ENCODE measurements at regions of chr5 and their contacts with region 1.

Region 1: DNA sequence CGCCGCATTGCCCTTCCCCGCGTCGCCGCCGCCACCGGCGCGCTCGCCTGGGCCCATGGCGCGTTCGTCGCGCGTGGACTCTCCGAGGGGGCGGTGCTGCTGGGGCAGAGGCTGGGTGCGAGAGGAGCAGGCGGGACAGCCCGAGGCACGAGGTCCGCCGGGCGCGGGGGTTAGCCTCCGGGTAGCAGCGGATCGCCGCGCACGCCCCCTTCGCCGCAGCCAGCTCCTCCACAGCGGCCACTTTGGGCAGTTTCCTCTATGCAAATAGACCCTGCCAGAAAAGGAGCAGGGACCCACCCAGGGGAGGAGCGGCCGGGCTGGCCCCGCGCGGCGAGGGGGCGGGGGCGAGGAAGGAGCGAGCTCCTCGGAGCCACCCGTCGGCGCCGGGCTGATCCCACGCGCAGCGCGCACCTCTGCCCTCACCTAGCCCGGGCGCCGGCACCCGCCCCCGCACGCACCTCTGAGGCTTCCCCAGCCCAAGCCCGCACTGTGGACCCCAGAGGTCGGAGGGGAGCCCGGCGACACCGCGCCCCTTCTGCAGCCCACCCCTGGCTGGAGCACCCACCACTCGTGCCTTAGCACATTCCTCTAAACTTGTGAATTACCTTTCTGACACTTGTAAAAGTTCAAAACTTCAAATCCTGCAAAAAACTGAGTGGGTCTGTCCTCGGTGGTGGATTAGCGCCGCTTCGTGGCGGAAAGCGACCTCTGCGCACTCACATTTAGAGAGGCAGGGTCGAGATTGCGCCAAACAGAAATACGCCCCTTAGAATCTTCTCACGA is at the start of gene COL23A1:
- DNase-seq: peak; percentile 90
- H3K4me3 ChIP-seq: peak within 1 kb of the TSS; percentile 57 to 60; a peak in 3 of 4 replicates
- H3K27ac ChIP-seq: peak within 1 kb of the TSS in 1 of 2 experiments; percentile 65; a peak in 1 of 4 replicates
- H3K4me1 ChIP-seq: peaks cover 0 to 20% of the 10 kb centered on the region in 2 experiments; a peak in 1 of 4 replicates
- H3K27me3 ChIP-seq: no peaks in the 10 kb centered on the region; the same call in 1 of the 2 replicates
- CTCF ChIP-seq: peak; percentile 54
- EP300 ChIP-seq: no peak
- RAD21 ChIP-seq: peak; percentile 90
- polyA plus RNA-seq, gene COL23A1: 0.03 and 0.10 TPM in 2 replicates

Region 2: DNA sequence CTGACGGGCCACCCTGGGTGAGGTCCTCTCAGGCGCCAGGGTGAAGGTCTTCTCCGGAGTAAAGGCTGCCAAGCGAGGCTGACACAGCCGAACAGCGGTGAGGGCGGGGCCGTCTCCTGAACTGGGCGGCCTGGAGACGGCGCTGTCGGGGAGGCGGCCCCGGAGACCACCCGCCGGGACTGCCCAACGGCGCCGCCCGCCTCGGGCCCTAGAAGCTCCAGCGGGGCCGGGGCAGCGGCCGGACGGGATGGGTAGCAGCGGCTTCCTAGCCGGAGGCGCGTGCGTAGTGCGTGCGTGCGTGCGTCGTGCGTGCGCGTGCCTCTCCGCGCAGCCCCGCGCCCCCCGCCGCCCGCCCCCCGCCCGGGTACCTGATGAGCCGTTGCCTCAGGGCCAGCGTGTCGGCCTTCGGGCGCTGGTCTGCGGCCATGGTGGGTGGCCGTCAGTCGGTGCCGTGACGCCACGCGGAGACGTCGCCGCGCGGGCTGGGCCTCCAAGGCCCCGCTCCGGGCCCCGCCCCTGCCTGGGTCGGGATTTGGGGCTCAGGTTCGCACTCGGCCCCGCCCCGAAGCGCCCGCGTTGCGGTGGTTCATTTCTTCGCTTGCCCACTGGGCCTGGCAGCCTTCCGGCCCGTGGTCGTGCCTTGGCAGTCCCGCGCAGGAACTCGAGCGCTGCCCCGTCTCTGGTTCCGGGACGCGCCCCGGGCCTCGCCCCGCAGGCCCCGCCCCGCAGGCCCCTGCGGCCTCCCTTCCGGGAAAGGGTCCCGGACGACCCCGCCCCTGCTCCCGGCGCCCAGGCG is 358.0 kb before region 1 on chr5 and contains the start of gene PHYKPL:
- CTCF ChIA-PET with region 1: interaction called, 147 read pairs
- POLR2A ChIA-PET with region 1: interaction called, 6 read pairs
- DNase-seq: peak; percentile 91
- H3K4me3 ChIP-seq: peak within 1 kb of the TSS; percentile 87
- H3K27ac ChIP-seq: peak within 1 kb of the TSS; percentile 56 to 86
- H3K4me1 ChIP-seq: peaks cover 11 to 33% of the 10 kb centered on the region in 2 experiments; a peak in 2 of 4 replicates
- H3K27me3 ChIP-seq: no peaks in the 10 kb centered on the region
- CTCF ChIP-seq: peak; percentile 27
- EP300 ChIP-seq: no peak
- RAD21 ChIP-seq: no peak
- polyA plus RNA-seq, gene PHYKPL: 46.8 and 61.3 TPM in 2 replicates

Region 3: DNA sequence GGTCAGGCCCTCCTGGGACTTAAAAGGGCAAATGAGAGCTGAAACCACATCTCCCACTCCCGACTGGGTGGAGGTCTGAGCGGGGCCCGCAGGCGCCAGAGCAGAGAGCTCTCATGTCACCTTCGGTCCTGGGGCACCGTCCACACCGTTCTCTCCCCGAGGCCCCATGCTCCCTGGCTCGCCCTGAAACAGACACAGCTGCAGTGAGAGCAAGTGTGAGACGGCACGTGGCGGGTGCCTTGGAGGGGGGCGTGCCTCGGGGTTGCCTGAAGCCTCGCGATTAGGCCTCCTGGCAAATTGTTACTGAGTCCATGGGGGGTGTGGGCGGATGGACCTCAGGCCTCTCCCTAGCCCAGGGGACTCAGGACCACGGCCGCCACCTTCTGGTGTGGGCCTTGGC is 333.6 kb before region 1 on chr5:
- CTCF ChIA-PET with region 1: interaction called, 10 read pairs
- POLR2A ChIA-PET with region 1: no interaction called
- DNase-seq: no peak
- H3K4me3 ChIP-seq: no peak overlapping the region
- H3K27ac ChIP-seq: no peak overlapping the region
- H3K4me1 ChIP-seq: no peaks in the 10 kb centered on the region
- H3K27me3 ChIP-seq: no peaks in the 10 kb centered on the region
- CTCF ChIP-seq: no peak
- EP300 ChIP-seq: no peak
- RAD21 ChIP-seq: no peak

Region 4: DNA sequence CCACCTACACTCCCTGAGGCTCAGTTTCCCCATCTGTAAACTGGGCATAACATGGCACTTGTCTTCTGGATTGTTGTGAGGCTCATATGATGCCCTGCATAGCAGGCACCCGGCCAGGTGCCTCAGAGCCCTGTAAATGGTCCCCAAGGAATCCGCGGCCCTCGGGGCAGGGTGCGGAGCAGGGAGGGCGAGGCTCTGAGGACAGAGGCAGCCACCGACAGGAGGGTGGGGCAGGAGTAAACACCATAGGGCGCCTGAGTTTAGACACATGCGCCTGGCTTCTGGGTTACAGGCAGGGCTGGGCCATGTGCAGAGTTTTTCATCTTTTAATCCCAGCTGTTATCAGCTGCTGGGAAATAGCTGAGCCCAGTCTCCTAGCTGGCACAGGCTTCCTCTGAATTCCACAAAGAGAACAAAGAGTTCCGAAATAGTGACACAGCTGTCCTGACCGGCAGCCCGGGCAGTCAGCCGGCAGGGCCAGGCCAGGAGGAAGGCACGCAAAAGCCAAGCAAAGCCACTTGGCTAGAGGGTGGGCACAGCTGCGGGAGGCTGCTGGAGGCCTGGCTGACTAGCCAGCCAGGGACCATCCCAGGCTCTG is 258.8 kb before region 1 on chr5:
- CTCF ChIA-PET with region 1: interaction called, 15 read pairs
- POLR2A ChIA-PET with region 1: no interaction called
- DNase-seq: peak; percentile 79
- H3K4me3 ChIP-seq: no peak overlapping the region
- H3K27ac ChIP-seq: peak overlapping the region in 1 of 2 experiments; percentile 92; a peak in 2 of 4 replicates
- H3K4me1 ChIP-seq: peaks cover 0 to 72% of the 10 kb centered on the region in 2 experiments; a peak in 1 of 4 replicates
- H3K27me3 ChIP-seq: no peaks in the 10 kb centered on the region
- CTCF ChIP-seq: no peak
- EP300 ChIP-seq: peak in 1 of 2 experiments; percentile 58; a peak in 1 of 4 replicates
- RAD21 ChIP-seq: peak; percentile 5; the same call in 1 of the 2 replicates

Region 5: GRCh38 chr5:178428341-178428964 is 161.9 kb before region 1 on chr5:
- CTCF ChIA-PET with region 1: no interaction called
- POLR2A ChIA-PET with region 1: no interaction called
- DNase-seq: peak; percentile 78
- H3K4me3 ChIP-seq: no peak overlapping the region
- H3K27ac ChIP-seq: peak overlapping the region in 1 of 2 experiments; percentile 93; a peak in 2 of 4 replicates
- H3K4me1 ChIP-seq: peaks cover 0 to 53% of the 10 kb centered on the region in 2 experiments; a peak in 1 of 4 replicates
- H3K27me3 ChIP-seq: no peaks in the 10 kb centered on the region
- CTCF ChIP-seq: no peak
- EP300 ChIP-seq: no peak
- RAD21 ChIP-seq: no peak

Region 6: DNA sequence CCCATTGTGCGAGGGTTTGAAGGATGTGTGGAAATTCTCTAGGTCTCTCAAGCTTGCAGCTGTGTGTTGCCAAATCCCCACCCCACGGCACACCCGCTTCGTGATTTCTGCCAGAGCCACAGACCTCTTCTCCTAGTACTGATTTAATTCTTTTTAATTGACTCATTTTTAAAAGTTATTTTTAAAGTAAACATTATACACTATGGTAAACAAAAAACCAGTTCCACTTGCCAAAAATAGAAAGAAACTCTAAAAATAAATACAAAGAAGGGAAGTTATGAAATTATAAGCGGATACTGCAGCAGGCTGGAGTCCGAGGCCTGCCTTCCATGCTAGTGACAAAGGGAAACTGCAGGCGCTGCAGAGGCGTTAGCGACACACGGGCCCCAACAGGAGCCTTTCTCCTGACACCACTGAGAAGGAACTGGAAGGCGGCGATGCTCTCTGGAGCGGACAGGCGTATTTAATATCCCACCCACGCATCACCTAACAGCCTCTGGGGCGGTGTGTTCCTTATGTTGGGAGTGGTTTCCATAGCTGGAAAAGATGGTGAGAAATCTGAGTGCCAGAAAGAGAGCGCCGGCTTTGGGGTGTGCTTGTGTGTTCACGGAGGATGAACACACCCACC is 122.7 kb before region 1 on chr5:
- CTCF ChIA-PET with region 1: interaction called, 10 read pairs
- POLR2A ChIA-PET with region 1: no interaction called
- DNase-seq: no peak
- H3K4me3 ChIP-seq: no peak overlapping the region
- H3K27ac ChIP-seq: peak overlapping the region in 1 of 2 experiments; percentile 58; a peak in 1 of 4 replicates
- H3K4me1 ChIP-seq: peaks cover 0 to 62% of the 10 kb centered on the region in 2 experiments; a peak in 1 of 4 replicates
- H3K27me3 ChIP-seq: no peaks in the 10 kb centered on the region
- CTCF ChIP-seq: no peak
- EP300 ChIP-seq: no peak
- RAD21 ChIP-seq: no peak

Region 7: DNA sequence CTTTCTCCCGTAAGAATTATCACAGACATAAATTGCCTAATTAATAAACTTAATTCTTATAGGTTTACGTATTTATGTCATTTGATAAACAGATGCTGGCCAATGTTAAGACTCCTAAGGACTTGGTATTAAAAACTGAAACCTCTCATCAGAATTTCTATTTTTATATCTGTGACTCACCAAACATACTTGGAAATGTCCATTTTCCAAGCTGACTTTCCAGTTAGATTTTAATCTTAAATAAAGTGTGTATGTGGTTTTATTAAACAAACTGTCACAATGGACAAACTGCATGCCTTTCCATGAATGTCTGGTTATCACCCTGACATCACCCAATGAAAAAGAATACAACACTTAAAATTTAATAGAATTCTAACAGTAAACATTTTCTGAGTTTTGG is 12.4 kb after region 1 on chr5:
- CTCF ChIA-PET with region 1: interaction called, 25 read pairs
- POLR2A ChIA-PET with region 1: no interaction called
- DNase-seq: no peak
- H3K4me3 ChIP-seq: no peak overlapping the region
- H3K27ac ChIP-seq: no peak overlapping the region
- H3K4me1 ChIP-seq: no peaks in the 10 kb centered on the region
- H3K27me3 ChIP-seq: no peaks in the 10 kb centered on the region
- CTCF ChIP-seq: no peak
- EP300 ChIP-seq: no peak
- RAD21 ChIP-seq: no peak

Region 8: DNA sequence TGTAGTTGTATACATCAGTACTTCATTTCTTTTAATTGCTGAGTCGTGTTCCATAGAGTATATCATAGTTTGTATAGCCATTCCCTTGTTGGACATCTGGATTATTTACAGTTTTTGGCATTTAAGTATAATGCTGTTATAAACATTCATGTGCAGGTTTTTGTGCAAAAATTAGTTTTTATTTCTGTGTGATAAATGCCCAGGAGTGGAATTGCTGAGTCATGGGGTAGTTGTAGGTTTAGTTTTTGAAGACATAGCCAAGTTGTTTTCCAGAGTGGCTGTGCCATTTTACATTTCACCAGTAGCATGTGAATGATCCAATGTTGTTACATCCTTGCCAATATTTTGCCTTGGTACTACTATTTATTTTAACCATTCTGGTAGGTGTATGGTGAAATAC is 282.0 kb after region 1 on chr5:
- CTCF ChIA-PET with region 1: no interaction called
- POLR2A ChIA-PET with region 1: no interaction called
- DNase-seq: no peak
- H3K4me3 ChIP-seq: no peak overlapping the region
- H3K27ac ChIP-seq: no peak overlapping the region
- H3K4me1 ChIP-seq: no peaks in the 10 kb centered on the region
- H3K27me3 ChIP-seq: no peaks in the 10 kb centered on the region
- CTCF ChIP-seq: no peak
- EP300 ChIP-seq: no peak
- RAD21 ChIP-seq: no peak